ENCODE measurements at regions of chr2 and their contacts with region 1.

Region 1: DNA sequence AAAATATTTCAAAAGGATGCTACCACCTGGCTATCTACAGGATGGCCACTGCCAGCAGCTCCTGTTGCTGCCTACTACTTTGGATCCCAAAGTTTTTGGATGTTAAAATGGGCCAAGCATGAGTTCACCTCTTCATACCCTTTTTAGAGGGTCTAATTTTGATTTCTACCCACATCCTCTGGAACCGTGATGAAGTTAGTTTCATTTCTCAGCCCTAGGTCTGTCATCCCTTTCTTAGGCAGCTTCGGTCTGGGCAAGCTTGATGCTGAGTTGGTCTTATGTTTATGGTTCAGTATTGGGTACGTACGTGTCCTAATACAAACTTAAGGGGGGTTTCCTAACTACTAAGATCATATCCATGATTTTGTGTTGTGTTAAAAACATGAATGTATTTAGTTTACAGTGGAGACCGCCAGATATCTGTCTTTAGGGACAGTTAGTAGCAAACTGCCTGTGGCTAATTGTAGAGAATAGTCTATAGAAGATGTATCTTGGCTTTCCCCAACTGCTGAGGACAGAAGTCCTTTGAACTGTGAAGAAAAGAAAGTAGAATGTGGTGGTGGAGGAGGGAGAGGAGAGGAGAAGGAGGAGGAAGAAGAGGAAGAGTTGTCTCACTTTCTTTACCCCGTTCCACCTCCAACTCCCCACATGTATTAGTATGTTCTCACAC is 184.9 kb downstream of the UBE2E3 start:
- DNase-seq: peak; percentile 35
- H3K4me3 Mint-ChIP-seq: peak overlapping the region; percentile 59
- H3K27ac Mint-ChIP-seq: peak overlapping the region; percentile 90
- H3K4me1 Mint-ChIP-seq: peaks cover 59% of the 10 kb centered on the region
- H3K27me3 Mint-ChIP-seq: no peaks in the 10 kb centered on the region

Region 2: GRCh38 chr2:181129364-181130056 is 35.8 kb before region 1 on chr2:
- CTCF ChIA-PET with region 1: no interaction called
- POLR2A ChIA-PET with region 1: no interaction called
- intact Hi-C with region 1: loop called (anchors 1 kb)
- DNase-seq: peak; percentile 40
- H3K4me3 Mint-ChIP-seq: peak overlapping the region; percentile 31
- H3K27ac Mint-ChIP-seq: peak overlapping the region; percentile 79
- H3K4me1 Mint-ChIP-seq: peaks cover 66% of the 10 kb centered on the region
- H3K27me3 Mint-ChIP-seq: no peaks in the 10 kb centered on the region

Region 3: GRCh38 chr2:181178823-181179412 is 13.6 kb after region 1 on chr2:
- CTCF ChIA-PET with region 1: interaction called, 3 read pairs
- POLR2A ChIA-PET with region 1: no interaction called
- intact Hi-C with region 1: loop called (anchors 2 kb)
- DNase-seq: peak; percentile 55
- H3K4me3 Mint-ChIP-seq: no peak overlapping the region
- H3K27ac Mint-ChIP-seq: peak overlapping the region; percentile 73
- H3K4me1 Mint-ChIP-seq: peaks cover 46% of the 10 kb centered on the region
- H3K27me3 Mint-ChIP-seq: no peaks in the 10 kb centered on the region

Measured in activated CD4-positive, alpha-beta memory T cell treated with anti-CD3 and anti-CD28 coated beads for 36 hours (primary cell).